Activated naive CD4-positive, alpha-beta T cell treated with anti-CD3 and anti-CD28 coated beads for 36 hours (primary cell): ENCODE measurements at regions of chr21 and their contacts with region 1.

Region 1: DNA sequence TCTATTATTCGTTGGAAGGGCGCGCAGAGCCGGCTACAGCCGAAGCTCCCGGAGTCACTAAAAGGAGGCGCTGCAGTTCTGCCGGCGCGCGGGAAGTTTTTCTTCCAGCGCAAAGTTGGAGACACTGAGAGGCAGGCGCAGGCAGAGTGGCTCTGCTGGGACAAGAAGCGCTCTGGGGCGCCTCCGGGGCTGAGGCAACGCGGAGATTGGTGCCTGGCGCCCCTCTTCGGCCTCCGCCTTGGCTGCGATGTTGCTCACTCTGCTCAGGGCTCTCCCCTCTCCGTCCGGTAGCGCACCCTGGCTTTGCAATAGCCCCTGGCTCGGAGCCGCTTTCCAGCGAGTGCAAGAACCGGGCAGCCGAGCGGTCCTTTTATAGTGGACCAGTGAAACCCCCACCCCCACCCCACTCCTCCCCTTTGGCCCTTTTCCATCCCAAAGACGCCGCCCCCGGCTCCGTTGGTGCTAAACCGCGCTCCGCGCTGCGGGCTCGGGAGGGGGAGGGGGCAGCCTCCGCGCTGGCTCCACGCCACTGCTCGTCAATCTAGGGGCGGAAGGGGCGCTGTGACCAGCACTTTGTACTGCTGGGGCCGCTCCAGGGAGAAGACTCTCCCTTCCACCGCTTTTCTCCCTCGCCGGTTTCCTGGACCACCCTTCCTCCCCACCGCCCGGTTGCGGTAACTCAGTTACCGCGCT is at the start of gene ADAMTS1:
- DNase-seq: peak; percentile 27
- H3K4me3 Mint-ChIP-seq: peak within 1 kb of the TSS; percentile 72
- H3K27ac Mint-ChIP-seq: no peak within 1 kb of the TSS
- H3K4me1 Mint-ChIP-seq: peaks cover 33% of the 10 kb centered on the region
- H3K27me3 Mint-ChIP-seq: peaks cover 73% of the 10 kb centered on the region
- total RNA-seq, gene ADAMTS1: not detected

Region 2: GRCh38 chr21:26769613-26770188 is 75.5 kb before region 1 on chr21:
- CTCF ChIA-PET with region 1: no interaction called
- intact Hi-C with region 1: loop called (anchors 2 kb)
- DNase-seq: no peak
- H3K4me3 Mint-ChIP-seq: no peak overlapping the region
- H3K27ac Mint-ChIP-seq: no peak overlapping the region
- H3K4me1 Mint-ChIP-seq: no peaks in the 10 kb centered on the region
- H3K27me3 Mint-ChIP-seq: peaks cover 2% of the 10 kb centered on the region

Region 3: DNA sequence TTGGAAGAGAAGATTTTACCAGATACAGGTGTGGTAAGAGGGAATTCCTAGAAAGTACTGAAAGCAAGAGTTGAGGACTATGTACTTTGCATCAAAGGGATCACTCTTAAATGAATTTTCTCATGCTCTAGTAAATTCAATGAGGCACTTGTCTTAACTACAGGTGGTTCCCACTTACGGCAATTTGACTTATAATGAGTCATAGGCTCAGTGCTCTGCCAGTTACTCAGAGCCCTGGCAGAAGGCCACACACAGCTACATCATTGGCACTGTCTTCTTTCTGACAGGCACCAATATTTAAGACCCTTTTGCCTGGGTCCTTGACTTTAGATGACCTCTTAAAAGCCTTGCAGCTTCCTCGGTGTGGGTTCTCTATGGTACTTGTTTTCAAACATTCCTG is 137.6 kb after region 1 on chr21:
- CTCF ChIA-PET with region 1: no interaction called
- intact Hi-C with region 1: no loop called
- DNase-seq: no peak
- H3K4me3 Mint-ChIP-seq: no peak overlapping the region
- H3K27ac Mint-ChIP-seq: no peak overlapping the region
- H3K4me1 Mint-ChIP-seq: no peaks in the 10 kb centered on the region
- H3K27me3 Mint-ChIP-seq: no peaks in the 10 kb centered on the region

Region 4: DNA sequence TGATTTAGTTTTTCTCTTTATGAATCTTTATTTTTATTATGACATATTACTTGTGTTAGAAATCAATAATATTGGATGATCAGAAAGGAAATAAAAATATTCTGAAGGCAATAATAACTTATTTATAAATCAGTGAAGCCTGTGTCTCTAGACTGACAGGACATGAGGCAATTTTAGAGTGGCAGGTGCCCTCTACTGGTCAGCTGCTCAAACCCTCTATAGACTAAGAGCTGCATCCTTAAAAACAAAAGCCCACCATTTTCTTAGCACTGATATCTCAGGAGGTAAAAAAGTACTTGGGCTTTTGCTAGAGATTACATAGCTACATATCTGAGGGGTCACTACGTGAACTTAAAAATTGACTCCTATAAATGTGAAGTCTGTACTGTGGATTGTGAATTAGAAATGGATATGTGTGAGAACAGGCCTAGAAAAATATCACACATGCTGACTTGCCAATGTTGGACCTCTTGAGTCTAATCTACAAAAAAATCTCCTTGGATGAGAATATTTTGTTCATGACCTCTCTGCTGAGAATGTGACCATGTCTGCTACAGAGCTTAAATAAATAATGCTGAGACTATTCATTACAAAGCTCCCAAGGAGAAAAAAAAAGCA is 719.6 kb after region 1 on chr21:
- CTCF ChIA-PET with region 1: interaction called, 3 read pairs
- intact Hi-C with region 1: loop called (anchors 1 kb)
- DNase-seq: peak; percentile 16
- H3K4me3 Mint-ChIP-seq: no peak overlapping the region
- H3K27ac Mint-ChIP-seq: no peak overlapping the region
- H3K4me1 Mint-ChIP-seq: no peaks in the 10 kb centered on the region
- H3K27me3 Mint-ChIP-seq: no peaks in the 10 kb centered on the region

Region 5: GRCh38 chr21:27802816-27803475 is 957.7 kb after region 1 on chr21:
- CTCF ChIA-PET with region 1: no interaction called
- intact Hi-C with region 1: loop called (anchors 1 kb)
- DNase-seq: peak; percentile 38
- H3K4me3 Mint-ChIP-seq: no peak overlapping the region
- H3K27ac Mint-ChIP-seq: no peak overlapping the region
- H3K4me1 Mint-ChIP-seq: no peaks in the 10 kb centered on the region
- H3K27me3 Mint-ChIP-seq: no peaks in the 10 kb centered on the region

Region 6: GRCh38 chr21:28516991-28517592 is 1671.9 kb after region 1 on chr21:
- CTCF ChIA-PET with region 1: interaction called, 3 read pairs
- intact Hi-C with region 1: loop called (anchors 5 kb)
- DNase-seq: peak; percentile 79
- H3K4me3 Mint-ChIP-seq: no peak overlapping the region
- H3K27ac Mint-ChIP-seq: no peak overlapping the region
- H3K4me1 Mint-ChIP-seq: no peaks in the 10 kb centered on the region
- H3K27me3 Mint-ChIP-seq: no peaks in the 10 kb centered on the region